ENCODE measurements at regions of chr3 and their contacts with region 1.

Region 1: GRCh38 chr3:45224824-45225464 is 1.1 kb downstream of the TMEM158 start:
- DNase-seq: peak; percentile 40
- ATAC-seq: peak; percentile 90
- H3K4me3 ChIP-seq: peak overlapping the region; percentile 16 to 67 (median 37); a peak in 5 of 6 replicates
- H3K27ac ChIP-seq: no peak overlapping the region
- H3K4me1 ChIP-seq: 0 out of 2 replicates have a peak, but pooled peaks cover 5% of the 10 kb centered on the region
- H3K27me3 ChIP-seq: peaks cover 4 to 72% of the 10 kb centered on the region in 2 experiments; a peak in 4 of 5 replicates
- CTCF ChIP-seq: peak; percentile 88
- EP300 ChIP-seq: no peak
- POLR2A ChIP-seq: no peak
- RAD21 ChIP-seq: peak; percentile 92

Region 2: DNA sequence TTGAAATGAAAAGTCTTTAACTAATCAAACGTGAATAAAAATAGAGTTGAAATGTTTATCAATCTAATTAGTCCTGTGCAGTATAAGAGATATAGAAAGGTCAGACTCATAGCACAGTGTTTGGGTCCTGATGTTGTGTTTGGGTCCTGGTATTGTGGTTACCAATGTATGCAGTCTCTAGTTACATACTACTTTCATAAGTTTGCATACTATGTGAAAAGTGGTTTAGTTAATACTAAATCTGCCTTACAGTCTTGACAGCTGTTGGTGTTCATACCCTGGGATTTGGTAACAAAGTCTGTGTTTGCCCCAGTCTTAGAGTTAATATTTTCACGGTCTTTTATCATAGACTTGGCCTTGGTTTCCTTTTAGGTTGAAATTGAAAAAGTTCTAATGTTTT is 421.6 kb before region 1 on chr3:
- CTCF ChIA-PET with region 1: no interaction called
- POLR2A ChIA-PET with region 1: no interaction called
- in situ Hi-C with region 1: no loop called
- intact Hi-C with region 1: no loop called
- DNase-seq: no peak
- ATAC-seq: no peak
- H3K4me3 ChIP-seq: no peak overlapping the region
- H3K27ac ChIP-seq: no peak overlapping the region
- H3K4me1 ChIP-seq: no peaks in the 10 kb centered on the region
- H3K27me3 ChIP-seq: no peaks in the 10 kb centered on the region
- CTCF ChIP-seq: no peak
- EP300 ChIP-seq: no peak
- POLR2A ChIP-seq: no peak
- RAD21 ChIP-seq: no peak

Region 3: DNA sequence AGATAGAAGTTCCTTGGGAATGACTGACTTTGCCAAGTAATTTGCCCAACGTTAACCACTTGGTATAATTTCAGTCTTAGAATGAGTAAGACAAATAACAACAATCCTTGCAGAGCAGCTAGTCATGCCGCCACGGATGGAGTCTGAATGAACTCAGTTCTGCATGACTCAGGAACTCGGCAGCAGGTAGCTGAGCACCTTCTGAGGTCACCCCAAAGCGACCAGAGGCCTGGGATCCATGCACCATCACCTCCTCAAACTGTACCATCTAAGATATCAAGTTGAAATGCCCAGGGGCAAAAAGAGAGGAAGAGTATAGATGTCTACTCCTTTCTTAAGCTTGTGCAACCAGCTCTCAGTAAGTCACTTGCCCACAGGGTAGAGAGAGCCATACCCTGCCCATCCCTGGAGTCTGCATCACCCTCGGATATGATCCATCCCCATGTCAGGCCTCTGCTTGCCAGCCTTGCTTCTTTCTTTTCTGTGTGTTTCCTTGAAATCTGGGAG is 70.2 kb before region 1 on chr3:
- CTCF ChIA-PET with region 1: no interaction called
- POLR2A ChIA-PET with region 1: no interaction called
- in situ Hi-C with region 1: no loop called
- intact Hi-C with region 1: no loop called
- DNase-seq: no peak
- ATAC-seq: peak; percentile 35; the same call in 1 of the 3 replicates
- H3K4me3 ChIP-seq: no peak overlapping the region
- H3K27ac ChIP-seq: no peak overlapping the region
- H3K4me1 ChIP-seq: peaks cover 22% of the 10 kb centered on the region
- H3K27me3 ChIP-seq: no peaks in the 10 kb centered on the region
- CTCF ChIP-seq: no peak
- EP300 ChIP-seq: no peak
- POLR2A ChIP-seq: no peak
- RAD21 ChIP-seq: no peak

Region 4: DNA sequence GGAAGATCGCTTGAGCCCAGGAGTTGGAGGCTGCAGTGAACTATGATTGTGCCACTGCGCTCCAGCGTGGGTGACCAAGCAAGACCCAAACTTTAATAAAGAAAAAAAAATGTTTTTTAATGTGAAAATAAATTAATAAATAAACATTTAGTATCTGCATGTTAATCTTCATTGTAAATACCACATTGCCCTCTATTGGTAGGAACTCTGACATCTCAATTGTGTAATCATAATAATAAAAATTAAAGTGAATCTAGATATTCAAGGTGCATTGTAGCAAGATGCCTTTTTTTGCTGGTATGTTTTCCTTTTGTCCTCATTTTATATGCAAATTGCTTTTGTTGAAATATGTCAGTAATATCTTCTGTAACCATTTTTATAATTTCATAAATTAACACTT is 274.6 kb after region 1 on chr3:
- CTCF ChIA-PET with region 1: interaction called, 3 read pairs
- POLR2A ChIA-PET with region 1: no interaction called
- in situ Hi-C with region 1: loop called (anchors 5 kb)
- intact Hi-C with region 1: loop called (anchors 5 kb)
- DNase-seq: peak; percentile 12
- ATAC-seq: no peak
- H3K4me3 ChIP-seq: no peak overlapping the region
- H3K27ac ChIP-seq: no peak overlapping the region
- H3K4me1 ChIP-seq: no peaks in the 10 kb centered on the region
- H3K27me3 ChIP-seq: no peaks in the 10 kb centered on the region
- CTCF ChIP-seq: no peak
- EP300 ChIP-seq: no peak
- POLR2A ChIP-seq: no peak
- RAD21 ChIP-seq: no peak

Region 5: DNA sequence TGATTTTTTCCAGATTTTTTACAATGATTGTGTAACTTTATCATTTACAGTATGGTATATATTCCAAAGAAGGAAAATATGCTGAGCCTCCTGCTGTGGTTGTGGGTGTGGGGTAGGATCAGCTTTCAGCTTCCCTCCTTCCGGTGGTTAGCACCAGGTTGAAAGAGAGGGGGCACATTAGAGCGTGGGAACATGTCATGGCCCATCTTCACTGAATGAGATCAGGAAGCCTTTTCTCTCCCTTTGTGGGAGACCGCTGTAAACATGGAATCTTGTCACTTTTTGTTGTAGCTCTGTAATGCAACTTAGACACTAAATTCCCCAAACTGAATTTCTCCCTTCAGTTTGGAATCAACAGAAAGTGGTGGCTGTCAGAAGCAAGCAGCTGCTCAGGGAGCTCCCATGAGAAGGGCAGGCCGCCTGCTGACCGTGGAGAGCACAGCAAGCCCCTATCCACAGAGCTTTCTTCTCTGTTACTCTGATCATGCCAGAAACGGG is 282.9 kb after region 1 on chr3:
- CTCF ChIA-PET with region 1: no interaction called
- POLR2A ChIA-PET with region 1: no interaction called
- in situ Hi-C with region 1: no loop called
- intact Hi-C with region 1: loop called (anchors 5 kb)
- DNase-seq: no peak
- ATAC-seq: peak; percentile 70; the same call in 2 of the 3 replicates
- H3K4me3 ChIP-seq: no peak overlapping the region
- H3K27ac ChIP-seq: no peak overlapping the region
- H3K4me1 ChIP-seq: peaks cover 8% of the 10 kb centered on the region
- H3K27me3 ChIP-seq: no peaks in the 10 kb centered on the region
- CTCF ChIP-seq: no peak
- EP300 ChIP-seq: no peak
- POLR2A ChIP-seq: no peak
- RAD21 ChIP-seq: no peak

Region 6: GRCh38 chr3:45915518-45916231 is 690.7 kb after region 1 on chr3:
- CTCF ChIA-PET with region 1: no interaction called
- POLR2A ChIA-PET with region 1: no interaction called
- in situ Hi-C with region 1: loop called (anchors 25 kb)
- intact Hi-C with region 1: no loop called
- DNase-seq: no peak
- ATAC-seq: peak; percentile 20; the same call in 1 of the 3 replicates
- H3K4me3 ChIP-seq: no peak overlapping the region
- H3K27ac ChIP-seq: no peak overlapping the region
- H3K4me1 ChIP-seq: no peaks in the 10 kb centered on the region
- H3K27me3 ChIP-seq: no peaks in the 10 kb centered on the region
- CTCF ChIP-seq: no peak
- EP300 ChIP-seq: no peak
- POLR2A ChIP-seq: no peak
- RAD21 ChIP-seq: no peak

Measured in HepG2 (cell line).